Dorsolateral prefrontal cortex (tissue), 120 donors: ENCODE measurements at regions of chr19 and their contacts with region 1.

Region 1: GRCh38 chr19:18251587-18252369 is 22.5 kb downstream of the IQCN start:
- DNase-seq: peak in 9 of 10 donors; percentile 64 to 85 (median 75)
- H3K4me3 ChIP-seq: peak overlapping the region in 2 of 59 donors; percentile 14 to 17
- H3K27ac ChIP-seq: no peak overlapping the region
- H3K27me3 ChIP-seq: no peaks in the 10 kb centered on the region
- CTCF ChIP-seq: peak; percentile 77 to 99 (median 94)

Region 2: GRCh38 chr19:17932485-17933338 is 319.1 kb before region 1 on chr19 and contains the start of gene CCDC124:
- intact Hi-C with region 1: loop called in 1 of 2 experiments (anchors 10 kb)
- DNase-seq: peak; percentile 79 to 89 (median 84)
- H3K4me3 ChIP-seq: peak within 1 kb of the TSS; percentile 63 to 100 (median 93)
- H3K27ac ChIP-seq: peak within 1 kb of the TSS; percentile 88 to 100 (median 96)
- H3K27me3 ChIP-seq: no peaks in the 10 kb centered on the region
- CTCF ChIP-seq: peak; percentile 55 to 93 (median 80)
- total RNA-seq, gene CCDC124: 46.6 to 103 (median 70.3) TPM